BJ (cell line): ENCODE measurements at regions of chr19 and their contacts with region 1.

Region 1: GRCh38 chr19:47863514-47863936 is 4.5 kb downstream of the TPRX2 start:
- DNase-seq: no peak
- H3K4me3 ChIP-seq: no peak overlapping the region
- H3K27me3 ChIP-seq: no peaks in the 10 kb centered on the region
- CTCF ChIP-seq: peak; percentile 99

Region 2: DNA sequence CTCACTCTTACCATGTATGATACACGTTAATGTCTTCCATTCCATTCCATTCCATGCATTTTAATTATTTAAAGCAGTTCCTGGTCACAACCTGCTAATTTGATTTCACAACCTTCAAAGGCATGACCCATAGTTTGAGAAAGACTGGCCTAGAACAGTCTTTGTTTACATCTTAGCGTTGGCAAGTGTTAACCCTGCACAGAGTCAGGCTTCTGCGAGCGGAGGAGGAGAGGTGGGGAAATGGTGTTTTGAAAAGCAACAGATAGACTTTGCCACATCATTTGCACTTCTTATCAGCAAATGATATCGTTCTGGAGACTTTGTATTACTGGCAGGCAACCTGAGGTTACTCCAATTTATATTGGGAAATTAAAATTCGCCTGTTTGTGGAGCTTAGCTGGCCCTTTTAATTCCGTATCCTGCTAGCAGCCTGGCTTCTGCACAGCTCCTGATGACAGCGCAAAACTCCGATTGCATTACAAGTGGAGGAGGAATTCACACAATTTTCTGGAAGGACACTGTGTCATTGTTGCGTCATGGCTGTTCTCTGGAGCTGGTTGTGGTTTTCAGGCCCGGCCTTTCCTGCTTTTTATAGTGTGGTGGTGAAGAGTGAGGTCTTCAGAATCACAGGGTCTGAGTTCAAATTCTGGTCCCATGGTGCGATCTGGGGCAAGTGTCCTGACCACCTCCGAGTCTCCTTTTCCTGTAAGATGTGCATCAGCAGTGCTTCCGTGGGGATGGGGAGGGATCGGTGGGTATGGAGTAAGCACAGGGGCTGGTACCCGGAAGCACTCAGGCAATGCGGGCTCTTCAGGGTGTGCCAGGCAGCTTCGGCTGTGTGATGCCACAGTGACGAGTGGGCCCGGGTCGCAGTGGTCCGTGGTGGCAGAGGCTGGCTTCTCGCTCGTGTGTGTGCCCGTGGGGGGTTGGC is 199.4 kb before region 1 on chr19:
- CTCF ChIA-PET with region 1: no interaction called
- POLR2A ChIA-PET with region 1: no interaction called
- DNase-seq: peak; percentile 94
- H3K4me3 ChIP-seq: no peak overlapping the region
- H3K27me3 ChIP-seq: no peaks in the 10 kb centered on the region
- CTCF ChIP-seq: no peak

Region 3: GRCh38 chr19:47765523-47766358 is 97.8 kb before region 1 on chr19:
- CTCF ChIA-PET with region 1: interaction called, 13 read pairs
- POLR2A ChIA-PET with region 1: no interaction called
- DNase-seq: no peak
- H3K4me3 ChIP-seq: no peak overlapping the region
- H3K27me3 ChIP-seq: no peaks in the 10 kb centered on the region
- CTCF ChIP-seq: peak; percentile 80

Region 4: DNA sequence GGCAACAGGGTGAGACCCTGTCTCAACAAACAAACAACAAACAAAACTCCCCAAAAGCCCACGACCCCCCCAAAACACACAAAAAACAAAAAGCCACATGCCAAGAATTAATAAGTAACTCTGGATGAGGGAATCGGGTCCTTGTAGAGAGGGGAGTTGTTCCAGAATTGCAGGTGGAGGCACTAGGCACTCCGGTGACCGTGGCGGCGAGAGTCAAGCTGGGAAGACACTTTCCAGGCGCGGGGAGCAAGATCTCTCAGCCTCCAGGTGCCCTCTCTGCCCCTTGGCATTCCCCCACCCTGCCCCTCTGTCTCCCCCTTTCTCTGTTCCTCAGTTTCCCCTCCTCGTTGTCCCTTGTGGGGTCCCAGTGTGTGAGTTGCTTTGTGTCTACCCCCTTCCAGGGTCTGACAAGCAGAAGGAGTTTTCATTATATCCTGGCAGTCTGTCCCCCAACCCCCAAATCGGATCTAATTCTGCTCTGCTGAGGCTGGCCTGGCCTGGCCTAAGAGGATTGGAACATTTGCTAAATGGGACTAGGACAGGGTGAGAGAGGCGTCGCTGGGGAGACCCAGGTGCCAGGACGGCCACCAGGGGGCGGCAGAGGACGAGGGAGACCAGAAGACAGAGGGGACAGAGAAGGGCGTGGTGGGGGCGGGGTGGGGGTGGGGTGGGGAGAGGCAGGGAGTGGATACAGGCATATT is 50.1 kb before region 1 on chr19:
- CTCF ChIA-PET with region 1: interaction called, 18 read pairs
- POLR2A ChIA-PET with region 1: no interaction called
- DNase-seq: no peak
- H3K4me3 ChIP-seq: no peak overlapping the region
- H3K27me3 ChIP-seq: no peaks in the 10 kb centered on the region
- CTCF ChIP-seq: peak; percentile 68

Region 5: GRCh38 chr19:47842941-47843340 is 20.6 kb before region 1 on chr19:
- CTCF ChIA-PET with region 1: interaction called, 14 read pairs
- POLR2A ChIA-PET with region 1: no interaction called
- DNase-seq: no peak
- H3K4me3 ChIP-seq: no peak overlapping the region
- H3K27me3 ChIP-seq: peaks cover 3% of the 10 kb centered on the region; the same call in 1 of the 2 replicates
- CTCF ChIP-seq: no peak

Region 6: DNA sequence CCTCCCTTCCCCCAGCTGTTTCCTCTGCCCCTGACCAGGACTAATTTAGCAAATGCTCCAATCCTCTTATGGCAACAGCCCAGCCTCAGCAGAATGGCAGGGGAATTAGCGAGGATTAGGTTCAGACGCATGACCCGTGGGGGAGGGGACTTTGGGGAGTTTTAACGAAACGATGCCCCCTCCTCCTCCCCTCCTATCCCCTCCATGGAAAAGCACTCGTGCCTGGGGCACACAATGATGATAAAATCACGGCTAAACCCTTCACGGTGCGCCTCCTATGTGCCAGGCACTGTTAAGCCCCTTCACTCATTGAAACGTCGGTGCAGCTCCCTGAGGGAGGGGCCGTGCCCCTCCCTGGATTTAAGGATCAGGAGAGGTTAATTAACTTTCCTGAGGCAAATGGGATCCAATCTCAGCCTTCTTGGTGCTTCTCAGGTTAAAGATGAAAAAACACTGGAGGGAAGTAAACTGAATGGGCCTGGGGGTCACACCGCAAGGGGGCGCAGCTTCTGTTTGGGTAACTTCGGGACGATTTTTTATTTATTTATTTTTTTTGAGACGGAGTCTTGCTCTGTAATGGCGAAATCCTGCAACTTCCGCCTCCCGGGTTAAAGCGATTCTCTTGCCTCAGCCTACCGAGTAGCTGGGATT is 14.6 kb before region 1 on chr19:
- CTCF ChIA-PET with region 1: interaction called, 14 read pairs
- POLR2A ChIA-PET with region 1: interaction called, 3 read pairs
- DNase-seq: no peak
- H3K4me3 ChIP-seq: no peak overlapping the region
- H3K27me3 ChIP-seq: peaks cover 12% of the 10 kb centered on the region
- CTCF ChIP-seq: peak; percentile 42

Region 7: DNA sequence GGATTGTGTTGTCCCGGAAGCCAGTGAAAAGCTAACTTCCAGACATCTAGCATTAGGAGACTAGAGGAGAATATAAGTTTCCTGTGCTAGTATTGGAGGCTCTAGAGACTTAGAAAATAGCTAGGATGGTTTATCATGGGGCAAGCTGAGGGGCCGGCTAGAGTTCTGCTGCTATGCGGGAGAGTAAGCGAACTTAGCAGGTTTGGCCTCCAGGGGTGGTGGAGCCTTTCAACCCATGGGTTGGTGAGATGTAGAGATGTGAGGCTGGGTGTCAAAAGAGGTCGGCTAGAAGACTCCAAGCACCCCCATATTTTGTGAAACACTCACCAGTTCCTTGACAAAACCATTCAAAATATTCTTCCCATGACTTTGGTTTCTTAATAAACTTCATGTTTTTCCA is 18.2 kb after region 1 on chr19:
- CTCF ChIA-PET with region 1: interaction called, 13 read pairs
- POLR2A ChIA-PET with region 1: no interaction called
- DNase-seq: no peak
- H3K4me3 ChIP-seq: no peak overlapping the region
- H3K27me3 ChIP-seq: peaks cover 3% of the 10 kb centered on the region
- CTCF ChIP-seq: no peak